CD8-positive, alpha-beta memory T cell (primary cell): ENCODE measurements at regions of chr15 and their contacts with region 1.

Region 1: DNA sequence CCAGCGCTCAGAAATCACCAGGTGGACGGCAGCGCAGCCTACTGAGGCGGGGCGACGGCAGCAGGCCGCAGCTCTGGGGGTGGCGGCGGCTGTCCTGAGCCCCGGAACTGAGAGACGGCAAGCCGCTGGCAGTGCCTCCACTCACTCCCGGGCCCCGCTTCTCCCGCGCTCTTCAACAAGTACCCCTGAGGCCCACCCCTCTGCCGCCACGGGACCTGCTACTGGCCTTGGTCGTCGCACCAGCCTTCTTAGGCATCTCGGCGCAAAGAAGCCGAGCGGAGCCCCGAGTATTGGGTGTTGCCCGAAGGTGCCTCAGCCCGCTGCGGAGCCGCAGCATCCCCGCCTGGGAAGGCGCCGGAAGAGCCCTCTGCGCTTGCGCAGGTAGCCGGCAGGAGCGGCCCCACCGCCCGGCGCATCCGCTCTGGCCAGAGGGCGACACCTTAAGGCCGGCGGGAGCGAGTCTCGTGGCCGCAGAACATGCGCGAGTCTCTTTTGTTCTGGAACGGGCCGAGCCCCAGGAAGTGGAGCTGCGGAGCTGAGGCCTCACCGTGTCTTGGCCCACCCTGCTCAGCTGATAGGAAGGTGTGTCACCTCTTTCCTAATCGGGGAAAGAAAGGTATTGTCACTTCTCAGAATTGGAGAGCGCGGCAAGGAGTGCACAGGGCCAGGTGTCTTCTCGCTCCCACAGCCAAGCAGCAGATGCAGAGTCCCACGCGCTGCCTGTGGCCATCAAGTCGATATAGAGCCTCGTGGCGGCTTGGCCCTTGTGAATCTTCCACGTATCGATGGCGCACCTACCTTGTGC is at the start of gene C15orf40:
- DNase-seq: peak; percentile 78 to 84 (median 83)
- H3K4me3 ChIP-seq: peak within 1 kb of the TSS; percentile 93
- H3K4me3 Mint-ChIP-seq: peak within 1 kb of the TSS; percentile 88 to 100 (median 97)
- H3K27ac ChIP-seq: peak within 1 kb of the TSS; percentile 84
- H3K27ac Mint-ChIP-seq: peak within 1 kb of the TSS; percentile 59 to 97 (median 96)
- H3K4me1 ChIP-seq: peaks cover 31% of the 10 kb centered on the region
- H3K4me1 Mint-ChIP-seq: peaks cover 46 to 62% (median 58%) of the 10 kb centered on the region in 3 donors
- H3K27me3 ChIP-seq: no peaks in the 10 kb centered on the region
- H3K27me3 Mint-ChIP-seq: peaks cover 0 to 1% of the 10 kb centered on the region in 2 donors
- total RNA-seq, gene C15orf40: 34.2 to 36.6 TPM

Region 2: GRCh38 chr15:82530606-82531379 is 480.7 kb before region 1 on chr15:
- CTCF ChIA-PET with region 1: interaction called, 12 read pairs
- POLR2A ChIA-PET with region 1: no interaction called
- DNase-seq: peak; percentile 50 to 80 (median 68)
- H3K4me3 ChIP-seq: peak overlapping the region; percentile 61
- H3K4me3 Mint-ChIP-seq: peak overlapping the region; percentile 7 to 88 (median 75)
- H3K27ac ChIP-seq: no peak overlapping the region
- H3K27ac Mint-ChIP-seq: peak overlapping the region in 6 of 8 donors; percentile 10 to 84 (median 64)
- H3K4me1 ChIP-seq: no peaks in the 10 kb centered on the region
- H3K4me1 Mint-ChIP-seq: peaks cover 0 to 6% (median 6%) of the 10 kb centered on the region in 3 donors
- H3K27me3 ChIP-seq: no peaks in the 10 kb centered on the region
- H3K27me3 Mint-ChIP-seq: no peaks in the 10 kb centered on the region

Region 3: DNA sequence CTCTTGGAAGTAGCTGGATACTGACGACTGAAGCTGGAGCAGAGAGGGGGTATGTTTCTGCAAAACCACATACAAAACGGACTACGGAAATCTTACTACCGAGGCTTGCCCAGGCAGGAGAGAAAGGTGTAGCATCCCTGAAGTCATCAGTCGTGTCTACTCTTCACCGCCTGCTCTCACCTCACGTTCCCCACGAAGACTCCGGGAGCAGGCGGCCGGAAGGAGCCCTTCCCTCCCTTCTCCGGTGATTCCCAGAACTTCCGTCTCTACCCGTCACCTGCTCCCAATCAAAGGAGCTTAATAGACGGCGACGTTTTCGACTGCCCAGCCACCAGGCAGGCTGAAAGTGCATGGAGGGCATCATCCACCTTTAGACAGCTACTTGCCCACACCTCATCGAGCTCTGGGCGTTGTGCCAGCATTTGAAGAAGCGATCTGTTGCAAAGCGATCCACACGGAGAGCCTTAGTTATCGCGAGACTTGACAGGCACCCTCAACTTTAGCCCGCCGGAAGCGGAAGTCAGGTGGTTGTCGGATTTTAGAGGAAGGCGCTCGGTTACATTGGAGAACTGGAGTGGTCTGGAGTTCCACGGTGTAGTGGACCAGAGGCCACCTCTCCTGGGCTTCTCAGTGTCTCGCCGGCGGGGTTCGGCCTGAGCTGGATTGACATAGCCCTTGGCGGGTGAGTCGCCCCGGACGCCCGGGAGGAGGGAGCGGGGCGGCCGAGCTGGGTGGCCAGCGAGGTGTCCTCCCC is 25.6 kb before region 1 on chr15 and contains the start of gene RAMAC:
- CTCF ChIA-PET with region 1: interaction called, 13 read pairs
- POLR2A ChIA-PET with region 1: interaction called, 14 read pairs
- DNase-seq: peak; percentile 87 to 97 (median 91)
- H3K4me3 ChIP-seq: peak within 1 kb of the TSS; percentile 79
- H3K4me3 Mint-ChIP-seq: peak within 1 kb of the TSS; percentile 93 to 99 (median 99)
- H3K27ac ChIP-seq: peak within 1 kb of the TSS; percentile 66
- H3K27ac Mint-ChIP-seq: peak within 1 kb of the TSS; percentile 44 to 99 (median 96)
- H3K4me1 ChIP-seq: peaks cover 22% of the 10 kb centered on the region
- H3K4me1 Mint-ChIP-seq: peaks cover 26 to 39% (median 34%) of the 10 kb centered on the region in 3 donors
- H3K27me3 ChIP-seq: no peaks in the 10 kb centered on the region
- H3K27me3 Mint-ChIP-seq: peaks cover 0 to 5% of the 10 kb centered on the region in 2 donors
- total RNA-seq, gene RAMAC: 27.7 to 29.6 TPM

Region 4: DNA sequence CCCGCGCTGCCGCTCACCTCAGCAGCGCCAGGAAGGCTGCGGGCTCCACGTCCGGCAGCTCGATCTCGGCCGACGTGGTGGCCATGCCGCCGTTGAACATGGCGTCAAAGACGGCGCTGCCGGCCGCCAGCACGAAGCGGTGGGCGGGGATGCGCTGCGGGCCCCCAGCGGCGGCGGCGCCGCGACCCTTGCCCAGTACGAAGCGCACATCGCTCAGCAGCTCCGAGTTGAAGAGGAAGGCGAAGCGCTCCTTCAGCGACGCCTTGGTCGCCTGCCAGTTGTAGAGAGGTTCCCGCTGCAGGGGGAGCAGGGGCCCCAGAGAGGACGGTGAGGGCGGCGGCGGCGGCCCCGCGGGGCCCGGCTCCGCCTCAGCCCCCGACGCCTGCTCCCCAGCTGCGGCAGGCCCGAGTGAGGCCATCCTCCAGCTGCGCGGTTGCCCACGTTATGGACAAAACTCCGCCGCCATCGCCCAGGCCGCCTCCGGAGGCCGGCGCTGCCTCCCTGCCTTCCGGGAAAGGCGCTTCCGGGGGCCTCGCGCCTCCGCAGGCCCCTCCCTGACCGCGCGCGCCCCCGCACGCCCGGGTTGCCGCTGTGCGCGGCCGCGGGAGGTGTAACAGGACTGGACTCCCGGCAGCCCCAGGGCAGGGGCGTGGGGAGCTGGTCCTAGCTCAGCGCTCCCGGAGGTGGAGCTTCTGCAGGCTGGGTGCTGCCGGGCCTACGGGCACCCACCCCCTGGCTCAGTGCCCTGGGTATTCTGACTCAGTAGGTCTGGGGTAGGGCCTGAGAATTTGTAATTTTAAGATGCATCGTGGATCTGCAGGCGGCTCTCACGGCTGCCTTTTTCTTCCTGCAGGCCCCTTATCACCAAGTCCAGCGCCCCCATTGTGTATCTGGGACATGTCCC is 55.5 kb after region 1 on chr15 and contains the start of gene BTBD1:
- CTCF ChIA-PET with region 1: interaction called, 8 read pairs
- POLR2A ChIA-PET with region 1: interaction called, 11 read pairs
- DNase-seq: peak; percentile 66 to 83 (median 78)
- H3K4me3 ChIP-seq: peak within 1 kb of the TSS; percentile 78
- H3K4me3 Mint-ChIP-seq: peak within 1 kb of the TSS in 5 of 7 donors; percentile 69 to 89 (median 81)
- H3K27ac ChIP-seq: peak within 1 kb of the TSS; percentile 88
- H3K27ac Mint-ChIP-seq: peak within 1 kb of the TSS; percentile 71 to 91 (median 87)
- H3K4me1 ChIP-seq: peaks cover 43% of the 10 kb centered on the region
- H3K4me1 Mint-ChIP-seq: peaks cover 0 to 17% (median 8%) of the 10 kb centered on the region in 3 donors
- H3K27me3 ChIP-seq: no peaks in the 10 kb centered on the region
- H3K27me3 Mint-ChIP-seq: peaks cover 0 to under 1% of the 10 kb centered on the region in 2 donors
- total RNA-seq, gene BTBD1: 55.5 to 57.7 TPM